Activated T-helper 1 cell treated with anti-CD3 and anti-CD28 coated beads, Interleukin-12 subunit alpha, Interleukin-12 subunit beta, Interleukin-2, Interleukin-4 antibody, amounts not matched to agents 30 ng/mL and 10 ng/mL and 1 ng/mL, durations not matched to agents 14 hours and 24 hours and 36 hours (primary cell): ENCODE measurements at regions of chr6 and their contacts with region 1.

Region 1: DNA sequence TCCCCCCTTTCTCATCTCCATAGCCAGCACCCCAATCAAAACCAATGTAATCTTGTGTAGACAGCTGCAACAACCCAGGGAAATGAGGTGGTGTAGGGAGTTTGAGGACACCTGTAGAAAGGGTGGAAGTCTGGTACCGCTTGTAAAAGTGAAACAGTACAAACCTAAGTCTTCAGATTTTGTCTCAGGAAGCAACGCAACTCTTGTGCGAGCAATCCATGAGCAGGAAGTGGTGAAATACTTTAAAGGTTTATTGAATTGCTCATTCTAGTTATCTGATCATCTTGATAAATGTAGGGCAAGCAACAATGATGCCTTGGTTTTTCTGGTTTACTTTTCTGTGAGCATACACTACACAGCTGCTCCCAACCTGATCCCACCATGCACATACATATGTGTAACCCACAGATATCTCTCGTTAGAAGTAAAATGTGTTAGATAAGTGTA is 71.1 kb upstream of the THEMIS start:
- DNase-seq: peak; percentile 63
- H3K4me3 Mint-ChIP-seq: peak overlapping the region; percentile 84
- H3K27ac Mint-ChIP-seq: peak overlapping the region; percentile 95
- H3K4me1 Mint-ChIP-seq: peaks cover 67% of the 10 kb centered on the region
- H3K27me3 Mint-ChIP-seq: no peaks in the 10 kb centered on the region

Region 2: DNA sequence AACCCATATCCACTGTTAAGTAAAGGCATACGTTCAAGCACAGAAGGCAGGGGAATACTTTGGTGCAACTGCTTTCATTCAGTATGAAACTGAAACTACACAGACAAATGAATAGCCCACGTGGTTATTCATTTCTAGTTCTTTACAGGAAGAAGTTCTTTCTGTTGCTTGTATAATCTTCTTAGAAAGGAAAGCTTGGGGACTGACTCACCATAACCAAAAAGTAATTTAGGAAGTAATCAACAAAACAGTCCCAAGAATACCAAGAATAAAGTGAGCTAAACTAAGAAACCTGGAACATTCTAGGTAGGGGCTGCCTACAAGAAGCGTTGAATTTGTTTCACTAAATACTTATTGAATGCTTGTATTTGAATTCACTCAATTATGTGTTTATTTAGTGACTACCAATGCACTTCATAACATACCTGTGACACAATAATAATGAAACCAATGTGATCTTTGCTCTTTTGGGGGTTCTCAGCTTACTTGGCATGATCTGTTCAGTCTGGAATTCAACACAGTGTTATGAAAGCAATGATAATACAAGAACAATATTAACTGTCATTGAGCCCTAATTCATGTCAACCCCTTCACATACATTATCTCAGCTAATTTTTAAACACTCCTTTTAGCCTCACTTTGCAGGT is 487.6 kb before region 1 on chr6:
- intact Hi-C with region 1: loop called (anchors 2 kb)
- DNase-seq: peak; percentile 14
- H3K4me3 Mint-ChIP-seq: peak overlapping the region; percentile 73
- H3K27ac Mint-ChIP-seq: peak overlapping the region; percentile 68
- H3K4me1 Mint-ChIP-seq: peaks cover 68% of the 10 kb centered on the region
- H3K27me3 Mint-ChIP-seq: no peaks in the 10 kb centered on the region

Region 3: DNA sequence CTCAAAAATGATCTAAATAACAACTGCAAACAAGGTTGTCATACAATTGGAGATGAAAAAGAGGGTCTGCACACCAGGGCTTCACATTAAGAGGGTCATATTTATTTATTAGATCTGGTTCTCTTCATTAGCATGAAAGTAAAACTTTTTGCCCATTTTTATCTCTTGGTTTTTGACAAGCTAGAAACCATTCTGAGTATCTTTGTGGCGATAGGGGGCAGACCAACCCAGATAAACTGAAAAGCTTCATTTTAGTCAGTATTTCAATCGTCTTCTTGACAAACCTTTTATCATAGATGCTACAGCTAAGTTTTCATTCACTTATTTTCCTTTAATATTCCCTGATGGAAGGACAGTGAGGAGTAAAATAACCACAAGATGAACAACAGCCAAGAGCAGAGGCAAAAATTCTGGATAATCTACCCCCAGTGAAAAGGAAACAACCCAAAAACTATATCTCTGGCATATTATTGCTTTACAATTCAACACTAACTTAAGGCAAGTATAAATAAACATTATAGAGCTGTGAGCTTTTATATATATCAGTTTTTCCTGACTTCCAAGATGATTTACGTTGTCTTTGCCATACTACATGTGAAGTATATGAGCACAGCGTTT is 116.3 kb before region 1 on chr6:
- intact Hi-C with region 1: loop called (anchors 1 kb)
- DNase-seq: no peak
- H3K4me3 Mint-ChIP-seq: no peak overlapping the region
- H3K27ac Mint-ChIP-seq: peak overlapping the region; percentile 14
- H3K4me1 Mint-ChIP-seq: peaks cover 48% of the 10 kb centered on the region
- H3K27me3 Mint-ChIP-seq: no peaks in the 10 kb centered on the region

Region 4: DNA sequence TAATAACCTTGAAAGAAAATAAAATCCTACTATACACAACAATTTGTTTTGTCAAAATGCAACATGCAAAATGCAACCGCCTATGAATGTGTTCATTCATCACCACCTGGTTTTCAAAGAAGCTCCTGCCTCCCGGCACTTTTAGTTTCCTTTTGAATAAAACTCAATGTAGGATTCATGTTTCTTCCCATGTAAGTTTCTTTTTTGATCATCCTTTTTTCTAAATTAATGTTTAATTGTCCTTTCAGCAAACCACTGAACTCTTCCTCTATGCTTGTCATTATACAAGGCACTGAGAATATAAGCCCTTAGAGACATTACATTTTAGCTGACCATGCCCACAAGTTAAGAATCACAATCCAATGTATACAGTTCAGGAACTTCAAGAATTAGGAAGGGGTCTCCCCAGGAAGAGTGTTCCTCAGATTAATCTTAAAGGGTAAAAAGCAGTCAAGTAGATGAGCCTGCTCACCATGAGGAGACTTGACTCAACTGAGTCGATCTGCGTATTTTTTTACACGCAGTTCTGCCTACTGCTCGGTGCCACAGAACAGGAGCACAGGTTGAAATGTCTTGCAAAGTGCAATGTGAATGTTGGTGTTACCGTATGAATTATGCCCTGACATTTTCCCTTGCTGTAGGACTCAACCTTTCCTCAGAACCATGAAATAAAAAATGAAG is 63.9 kb before region 1 on chr6:
- intact Hi-C with region 1: loop called (anchors 1 kb)
- DNase-seq: no peak
- H3K4me3 Mint-ChIP-seq: peak overlapping the region; percentile 66
- H3K27ac Mint-ChIP-seq: peak overlapping the region; percentile 82
- H3K4me1 Mint-ChIP-seq: peaks cover 45% of the 10 kb centered on the region
- H3K27me3 Mint-ChIP-seq: no peaks in the 10 kb centered on the region

Region 5: GRCh38 chr6:127951172-127951917 is 20.6 kb before region 1 on chr6:
- intact Hi-C with region 1: loop called (anchors 1 kb)
- DNase-seq: no peak
- H3K4me3 Mint-ChIP-seq: peak overlapping the region; percentile 32
- H3K27ac Mint-ChIP-seq: peak overlapping the region; percentile 85
- H3K4me1 Mint-ChIP-seq: peaks cover 43% of the 10 kb centered on the region
- H3K27me3 Mint-ChIP-seq: no peaks in the 10 kb centered on the region

Region 6: DNA sequence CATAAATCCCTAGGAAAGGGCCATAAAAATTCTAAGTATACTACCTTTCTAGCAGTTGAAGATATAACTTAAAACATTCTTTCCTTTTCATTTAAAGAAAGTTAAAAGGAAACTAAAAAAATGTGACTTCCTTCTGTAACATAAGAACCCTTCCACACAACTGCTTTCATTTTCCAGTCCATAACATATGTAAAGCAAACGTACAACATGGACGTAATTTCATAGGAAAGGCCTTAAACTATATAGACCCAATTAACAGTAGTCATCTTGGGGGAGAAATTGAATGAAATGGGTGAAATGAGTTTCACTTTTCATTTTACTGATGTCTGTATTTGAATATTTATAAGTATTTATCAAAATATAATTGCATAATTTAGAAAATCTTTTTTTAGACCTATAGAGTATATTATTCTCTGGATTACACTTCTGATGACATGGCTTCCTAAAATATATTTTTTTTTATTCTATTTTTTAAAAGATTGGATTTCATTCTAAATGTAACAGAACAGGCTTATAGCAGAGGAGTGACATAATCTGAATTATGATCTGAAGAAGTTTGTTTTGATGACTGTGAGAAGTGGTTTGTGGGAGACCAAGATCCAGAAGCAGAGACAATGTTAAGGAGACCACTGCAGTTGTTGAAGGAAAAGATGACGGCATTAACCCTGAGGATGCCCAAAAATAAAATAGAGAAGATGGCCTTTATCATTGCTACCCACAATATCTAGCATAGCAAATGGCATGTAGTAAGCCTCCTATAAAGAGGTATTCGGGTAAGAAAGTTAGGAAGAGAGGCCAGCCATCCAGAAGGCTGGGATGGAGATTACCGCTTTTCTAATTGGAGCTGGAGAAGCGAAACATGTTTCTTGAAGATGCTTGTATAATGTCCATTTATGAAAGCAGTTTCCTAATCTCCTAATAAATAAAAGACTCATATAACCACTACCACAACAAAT is 288.0 kb after region 1 on chr6:
- intact Hi-C with region 1: loop called (anchors 10 kb)
- DNase-seq: no peak
- H3K4me3 Mint-ChIP-seq: peak overlapping the region; percentile 25
- H3K27ac Mint-ChIP-seq: no peak overlapping the region
- H3K4me1 Mint-ChIP-seq: peaks cover 30% of the 10 kb centered on the region
- H3K27me3 Mint-ChIP-seq: no peaks in the 10 kb centered on the region

Region 7: DNA sequence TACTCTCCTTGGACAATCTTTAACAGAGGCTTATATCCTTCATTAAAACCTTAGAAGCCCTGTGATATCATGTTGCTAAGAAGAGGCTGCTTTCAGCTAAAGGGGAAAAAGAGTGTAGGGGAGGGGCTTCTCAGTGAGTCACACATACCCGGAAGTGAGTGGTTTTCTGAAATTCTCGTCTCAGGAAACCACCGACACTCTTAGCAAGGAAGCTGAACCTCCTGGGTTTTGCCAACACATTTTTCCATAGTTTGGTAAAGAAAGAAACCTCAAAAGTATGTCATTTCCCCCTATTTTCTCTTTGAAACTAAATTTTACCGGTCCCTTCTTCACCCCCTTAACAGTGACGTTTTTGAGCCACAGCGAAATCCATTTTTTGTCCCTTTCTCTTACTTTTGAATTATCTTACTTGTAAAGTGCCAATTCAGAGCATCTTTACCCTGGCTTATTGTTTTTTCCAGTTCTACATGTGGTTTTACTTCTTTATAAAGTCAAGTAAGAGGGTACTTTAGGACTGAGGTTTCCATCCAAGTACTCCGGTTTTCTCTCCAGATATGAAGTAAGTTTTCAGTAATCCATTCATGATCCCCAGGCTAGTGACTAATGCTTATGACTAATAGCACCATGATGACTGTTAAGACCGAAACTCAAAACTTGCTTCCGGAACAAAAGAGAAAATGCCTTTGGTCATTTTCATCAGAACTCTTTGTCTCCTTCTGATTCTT is 1518.7 kb after region 1 on chr6:
- intact Hi-C with region 1: loop called (anchors 2 kb)
- DNase-seq: peak; percentile 69
- H3K4me3 Mint-ChIP-seq: peak overlapping the region; percentile 77
- H3K27ac Mint-ChIP-seq: peak overlapping the region; percentile 99
- H3K4me1 Mint-ChIP-seq: peaks cover 68% of the 10 kb centered on the region
- H3K27me3 Mint-ChIP-seq: no peaks in the 10 kb centered on the region